Endothelial cell of umbilical vein (primary cell): ENCODE measurements at regions of chr15 and their contacts with region 1.

Region 1: DNA sequence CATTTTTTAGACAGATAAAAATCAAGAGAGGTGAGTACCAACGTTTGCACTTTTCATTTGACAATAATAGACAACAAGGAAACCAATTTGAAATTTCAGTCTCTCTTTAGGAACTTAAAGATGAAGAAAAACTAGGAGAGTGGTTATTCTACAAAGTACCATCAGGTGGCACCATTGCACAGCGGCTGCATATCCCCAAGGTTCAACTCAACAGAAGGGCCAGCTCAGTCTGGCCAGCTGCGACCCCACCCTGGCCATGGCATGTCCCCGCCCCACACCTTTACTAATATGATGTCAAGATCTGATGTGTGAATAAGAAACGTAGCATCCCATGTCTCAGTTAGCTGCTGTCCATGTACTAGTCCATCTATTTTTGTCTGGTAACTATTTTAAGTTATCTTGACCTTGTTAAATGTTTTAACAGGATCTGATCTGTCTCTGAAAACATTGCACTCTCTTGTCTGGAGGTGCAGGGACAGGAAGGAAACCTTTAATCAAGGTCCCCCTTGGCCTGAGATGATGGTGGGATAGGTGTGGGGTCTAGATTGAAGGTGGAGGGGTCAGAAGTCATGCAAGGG is 35.5 kb upstream of the CGNL1 start:
- DNase-seq: peak; percentile 82
- H3K4me3 ChIP-seq: no peak overlapping the region
- H3K27ac ChIP-seq: no peak overlapping the region
- H3K4me1 ChIP-seq: peaks cover 38% of the 10 kb centered on the region
- H3K27me3 ChIP-seq: no peaks in the 10 kb centered on the region
- CTCF ChIP-seq: peak; percentile 59 to 72
- POLR2A ChIP-seq: no peak

Region 2: DNA sequence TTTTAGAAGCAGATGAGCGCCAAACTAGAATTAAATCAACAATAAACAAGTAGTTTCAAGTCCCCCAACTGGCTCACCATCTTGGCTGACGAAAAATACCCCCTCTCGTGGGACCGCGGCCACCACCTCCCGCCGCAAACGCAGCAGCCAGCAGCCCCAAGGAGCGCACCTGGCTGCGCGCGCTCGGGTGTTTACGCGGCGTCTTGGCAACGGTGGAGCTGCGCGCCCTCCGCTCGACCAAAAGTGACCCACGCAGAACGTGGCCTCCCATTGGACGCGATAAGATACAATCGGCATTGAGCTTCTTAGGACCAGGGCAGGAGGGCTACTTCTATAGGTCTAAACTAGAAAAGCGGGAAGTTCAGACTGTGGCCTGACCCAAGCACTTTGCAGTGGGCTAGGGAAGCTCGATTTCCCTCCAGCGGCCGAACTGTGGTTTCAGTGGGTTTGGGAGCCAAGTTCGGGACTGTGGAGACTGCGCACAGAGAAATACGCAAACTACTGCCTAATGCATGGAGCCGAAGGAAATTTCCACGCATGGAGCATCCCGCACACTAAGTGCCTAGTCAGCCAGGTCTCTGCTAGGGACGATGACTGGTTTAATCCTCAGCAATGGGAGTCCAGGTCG is 875.8 kb before region 1 on chr15 and contains the start of gene MNS1:
- CTCF ChIA-PET with region 1: no interaction called
- POLR2A ChIA-PET with region 1: no interaction called
- dilution Hi-C with region 1: no loop called
- intact Hi-C with region 1: no loop called
- DNase-seq: peak; percentile 98
- H3K4me3 ChIP-seq: peak within 1 kb of the TSS; percentile 41 to 77 (median 64)
- H3K27ac ChIP-seq: no peak within 1 kb of the TSS
- H3K4me1 ChIP-seq: peaks cover 3% of the 10 kb centered on the region
- H3K27me3 ChIP-seq: peaks cover 2 to 10% of the 10 kb centered on the region in 2 experiments
- CTCF ChIP-seq: no peak
- POLR2A ChIP-seq: no peak
- total RNA-seq, gene MNS1: 2.3 and 2.6 TPM in 2 replicates

Region 3: DNA sequence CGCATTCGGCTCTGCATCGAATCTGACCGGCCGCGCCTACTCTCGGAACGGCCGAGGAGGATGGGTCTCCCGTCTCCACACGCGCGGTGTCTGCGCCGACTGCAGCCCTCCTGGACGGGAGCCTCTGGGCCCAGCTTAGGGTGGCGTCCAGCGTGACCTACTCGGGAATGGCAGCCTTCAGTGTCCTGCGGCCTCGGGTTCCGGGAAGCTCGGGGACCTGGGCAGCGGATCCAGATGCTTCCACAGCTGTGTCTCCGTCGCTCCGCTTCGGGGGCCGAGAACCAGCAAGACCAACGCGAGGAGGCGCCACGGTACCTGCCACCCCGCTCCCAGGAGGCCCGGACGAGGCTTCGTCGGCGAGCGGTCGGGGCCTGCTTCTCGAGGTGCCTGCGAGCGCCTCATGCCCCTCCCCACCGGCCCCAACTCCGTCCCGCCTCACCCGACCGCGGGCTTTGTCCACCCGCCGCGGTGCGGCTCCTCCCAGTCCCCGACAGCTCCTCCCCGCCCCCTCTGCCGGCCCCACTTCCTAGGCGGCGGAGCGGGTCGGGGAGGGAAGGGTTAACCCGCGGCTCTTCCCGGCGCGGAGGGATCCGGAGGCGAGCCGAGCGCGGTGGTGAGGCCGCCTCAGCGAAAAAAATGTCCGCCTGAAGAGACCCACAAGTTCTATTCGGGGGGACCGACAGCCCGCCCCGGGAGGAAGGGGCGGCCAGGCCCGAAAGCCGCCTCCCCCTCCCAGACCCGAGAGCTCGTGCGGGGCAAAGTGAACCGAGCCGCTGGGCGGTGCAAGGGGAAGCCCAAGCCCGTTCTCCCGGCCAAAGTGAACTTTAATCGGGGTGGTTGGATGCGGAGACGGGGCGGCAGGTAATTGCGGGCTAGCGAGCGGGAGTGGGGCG is 422.5 kb before region 1 on chr15 and contains the start of gene TCF12:
- CTCF ChIA-PET with region 1: no interaction called
- POLR2A ChIA-PET with region 1: no interaction called
- dilution Hi-C with region 1: no loop called
- intact Hi-C with region 1: loop called (anchors 5 kb)
- DNase-seq: peak; percentile 94
- H3K4me3 ChIP-seq: peak within 1 kb of the TSS; percentile 87 to 98 (median 87)
- H3K27ac ChIP-seq: peak within 1 kb of the TSS; percentile 86
- H3K4me1 ChIP-seq: peaks cover 42% of the 10 kb centered on the region
- H3K27me3 ChIP-seq: no peaks in the 10 kb centered on the region
- CTCF ChIP-seq: peak; percentile 11 to 51
- POLR2A ChIP-seq: peak; percentile 45
- total RNA-seq, gene TCF12: 127 and 133 TPM in 2 replicates

Region 4: DNA sequence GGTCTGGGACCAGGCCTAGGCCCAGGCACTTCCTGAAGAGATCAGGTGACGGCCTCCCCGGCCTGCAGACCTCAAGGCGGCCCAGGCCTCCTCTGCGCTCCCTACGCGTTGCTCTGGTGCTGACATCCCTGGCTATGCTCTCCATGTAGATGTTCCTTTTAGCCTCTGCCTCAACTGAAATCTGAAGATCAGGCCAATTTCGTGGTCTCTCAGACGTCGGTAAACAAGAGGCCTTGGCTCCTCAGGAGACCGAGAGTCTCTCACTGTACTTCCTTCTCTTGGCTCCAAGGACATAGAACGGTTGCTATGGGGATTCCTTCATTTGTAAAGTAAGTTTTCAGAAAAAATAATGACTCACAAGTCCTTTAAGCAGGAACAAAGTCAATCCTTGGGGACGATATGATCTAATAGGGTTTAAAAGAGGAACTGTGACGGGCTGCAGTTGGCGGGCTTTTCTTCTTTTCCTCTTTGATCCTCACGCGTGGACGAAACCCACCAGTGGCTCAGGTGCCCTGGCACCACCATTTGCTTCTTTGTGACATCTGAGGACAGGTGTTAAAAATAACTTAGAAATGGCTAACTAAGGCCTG is 20.0 kb before region 1 on chr15:
- CTCF ChIA-PET with region 1: interaction called, 8 read pairs
- POLR2A ChIA-PET with region 1: no interaction called
- dilution Hi-C with region 1: no loop called
- intact Hi-C with region 1: loop called (anchors 1 kb)
- DNase-seq: peak; percentile 74
- H3K4me3 ChIP-seq: no peak overlapping the region
- H3K27ac ChIP-seq: peak overlapping the region; percentile 83
- H3K4me1 ChIP-seq: peaks cover 35% of the 10 kb centered on the region
- H3K27me3 ChIP-seq: no peaks in the 10 kb centered on the region
- CTCF ChIP-seq: no peak
- POLR2A ChIP-seq: no peak

Region 5: GRCh38 chr15:57462381-57462780 is 121.6 kb after region 1 on chr15:
- CTCF ChIA-PET with region 1: interaction called, 9 read pairs
- POLR2A ChIA-PET with region 1: no interaction called
- dilution Hi-C with region 1: no loop called
- intact Hi-C with region 1: loop called (anchors 1 kb)
- DNase-seq: peak; percentile 52
- H3K4me3 ChIP-seq: no peak overlapping the region
- H3K27ac ChIP-seq: no peak overlapping the region
- H3K4me1 ChIP-seq: peaks cover 29% of the 10 kb centered on the region
- H3K27me3 ChIP-seq: no peaks in the 10 kb centered on the region
- CTCF ChIP-seq: no peak
- POLR2A ChIP-seq: no peak

Region 6: GRCh38 chr15:57527382-57528091 is 186.8 kb after region 1 on chr15:
- CTCF ChIA-PET with region 1: interaction called, 680 read pairs
- POLR2A ChIA-PET with region 1: interaction called, 5 read pairs
- dilution Hi-C with region 1: loop called (anchors 25 kb)
- intact Hi-C with region 1: loop called (anchors 1 kb)
- DNase-seq: peak; percentile 86
- H3K4me3 ChIP-seq: no peak overlapping the region
- H3K27ac ChIP-seq: no peak overlapping the region
- H3K4me1 ChIP-seq: peaks cover 35% of the 10 kb centered on the region
- H3K27me3 ChIP-seq: no peaks in the 10 kb centered on the region
- CTCF ChIP-seq: peak; percentile 41
- POLR2A ChIP-seq: no peak

Region 7: DNA sequence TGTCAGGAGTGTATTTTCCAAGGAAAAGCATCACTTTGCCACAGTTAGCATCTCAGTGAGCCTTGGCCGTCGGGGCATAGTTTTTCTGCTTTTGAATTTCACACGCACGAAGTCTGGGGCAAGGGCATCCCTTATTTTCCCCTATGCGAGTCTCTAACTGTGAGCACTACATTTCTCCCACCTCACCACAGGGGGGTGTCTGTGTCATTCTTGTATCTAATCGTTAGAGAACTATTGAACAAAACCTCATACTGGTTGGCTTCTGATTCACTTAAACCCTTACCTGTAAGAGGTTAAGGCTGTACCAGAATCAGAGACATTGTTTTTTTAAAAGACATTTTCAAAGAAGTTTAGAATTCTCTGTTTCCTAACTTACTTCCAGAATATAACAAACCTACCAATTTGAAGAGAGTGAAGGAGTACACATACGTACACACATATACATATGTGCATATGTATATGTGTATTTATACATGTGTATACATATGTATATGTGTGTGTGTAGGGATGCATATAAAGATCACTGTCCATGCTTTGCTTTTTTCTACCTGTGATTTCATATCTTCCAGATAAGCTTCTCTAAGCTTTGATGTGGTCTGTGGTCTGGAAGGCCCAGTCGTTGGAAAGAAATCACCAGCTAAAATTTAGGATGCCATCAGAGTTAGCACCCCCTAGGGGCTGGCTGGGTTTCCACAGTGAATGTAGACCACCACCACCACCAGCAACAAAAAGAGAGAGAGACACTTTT is 300.3 kb after region 1 on chr15:
- CTCF ChIA-PET with region 1: interaction called, 5 read pairs
- POLR2A ChIA-PET with region 1: no interaction called
- dilution Hi-C with region 1: no loop called
- intact Hi-C with region 1: loop called (anchors 5 kb)
- DNase-seq: peak; percentile 41
- H3K4me3 ChIP-seq: no peak overlapping the region
- H3K27ac ChIP-seq: no peak overlapping the region
- H3K4me1 ChIP-seq: no peaks in the 10 kb centered on the region
- H3K27me3 ChIP-seq: no peaks in the 10 kb centered on the region
- CTCF ChIP-seq: peak; percentile 32 to 46
- POLR2A ChIP-seq: no peak